KBM-7 (cell line): ENCODE measurements at regions of chr19 and their contacts with region 1.

Region 1: DNA sequence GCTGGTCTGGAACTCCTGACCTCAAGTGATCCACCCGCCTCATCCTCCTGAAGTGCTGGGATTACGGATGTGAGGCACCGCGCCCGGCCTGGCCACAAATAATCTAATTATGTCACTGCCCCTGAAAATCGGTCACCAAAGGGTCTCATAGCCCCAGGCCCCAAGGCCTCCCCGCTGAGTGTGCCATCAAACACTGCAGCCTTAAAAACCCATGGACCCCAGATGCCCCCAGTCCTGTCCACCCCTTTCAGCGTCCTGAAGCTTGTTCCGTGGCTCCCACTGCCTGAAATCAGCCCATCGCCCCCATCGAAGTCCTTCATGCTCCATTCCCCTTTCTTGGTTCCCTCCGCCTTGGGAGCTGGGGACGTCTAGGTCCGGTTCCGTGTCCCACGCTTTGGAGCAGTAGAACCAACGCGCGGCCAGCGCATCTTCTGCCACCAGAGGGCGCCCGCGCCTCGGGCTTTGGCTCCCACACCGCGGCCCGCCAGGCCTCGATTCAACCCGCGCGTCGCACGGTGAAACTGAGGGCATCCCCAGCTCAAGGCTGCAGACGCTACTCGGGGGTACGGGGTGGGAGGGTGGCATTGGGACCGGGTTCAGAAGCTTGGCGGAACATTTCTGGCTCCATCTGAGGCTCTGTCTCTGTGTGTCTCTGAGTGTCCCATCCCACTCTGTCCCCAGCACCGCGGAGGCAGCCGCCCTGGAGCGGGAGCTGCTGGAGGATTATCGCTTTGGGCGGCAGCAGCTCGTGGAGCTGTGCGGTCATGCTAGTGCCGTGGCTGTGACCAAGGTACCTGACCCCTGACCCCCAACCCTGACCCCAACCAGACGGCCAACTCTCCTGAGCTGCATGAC is 3.5 kb downstream of the YJEFN3 start:
- DNase-seq: peak; percentile 68

Region 2: DNA sequence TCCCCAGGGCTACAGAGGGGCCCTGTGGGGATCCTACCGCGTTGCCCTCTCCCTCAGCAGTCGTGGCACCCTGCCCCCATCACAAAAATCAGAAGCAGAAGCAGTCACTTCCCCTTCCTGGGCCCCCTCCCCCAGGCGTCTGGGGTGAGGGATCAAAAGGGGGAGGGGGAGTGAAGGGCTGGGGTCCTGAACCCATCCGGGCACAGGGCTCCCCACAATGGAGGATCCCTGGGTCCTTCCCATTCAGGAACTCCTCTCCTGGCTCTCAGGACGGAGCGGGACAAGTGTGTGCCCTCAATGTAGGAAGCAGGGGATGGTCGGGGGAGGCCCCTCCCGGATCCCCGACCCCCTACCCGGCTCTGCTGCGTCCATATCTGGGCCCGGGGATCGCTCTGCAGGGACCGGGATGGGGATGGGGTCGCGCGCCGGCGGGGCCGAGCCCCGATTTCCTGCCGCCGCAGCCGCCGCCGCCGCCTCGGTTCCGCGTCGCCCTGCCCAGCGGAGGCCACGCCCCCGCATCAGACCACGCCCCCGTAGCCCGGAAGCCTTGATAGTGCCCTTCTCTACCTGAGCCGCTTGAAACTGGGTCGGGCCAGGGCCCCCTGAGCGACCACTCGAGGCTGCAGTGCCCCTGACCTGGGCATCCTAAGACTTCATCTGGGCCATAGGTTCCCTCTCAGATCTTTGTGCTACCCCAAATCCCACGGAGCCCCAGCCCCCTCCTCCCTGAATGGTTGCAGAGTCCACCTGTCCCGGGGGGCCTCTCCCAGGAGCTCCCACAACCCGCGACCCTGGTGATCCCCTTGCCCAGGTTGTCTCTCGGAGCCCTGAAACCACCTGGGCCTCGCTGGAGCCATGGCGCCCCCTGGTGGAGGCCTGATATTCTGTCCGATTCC is 111.2 kb after region 1 on chr19 and contains the start of gene GMIP:
- in situ Hi-C with region 1: loop called (anchors 10 kb)
- DNase-seq: peak; percentile 80

Region 3: DNA sequence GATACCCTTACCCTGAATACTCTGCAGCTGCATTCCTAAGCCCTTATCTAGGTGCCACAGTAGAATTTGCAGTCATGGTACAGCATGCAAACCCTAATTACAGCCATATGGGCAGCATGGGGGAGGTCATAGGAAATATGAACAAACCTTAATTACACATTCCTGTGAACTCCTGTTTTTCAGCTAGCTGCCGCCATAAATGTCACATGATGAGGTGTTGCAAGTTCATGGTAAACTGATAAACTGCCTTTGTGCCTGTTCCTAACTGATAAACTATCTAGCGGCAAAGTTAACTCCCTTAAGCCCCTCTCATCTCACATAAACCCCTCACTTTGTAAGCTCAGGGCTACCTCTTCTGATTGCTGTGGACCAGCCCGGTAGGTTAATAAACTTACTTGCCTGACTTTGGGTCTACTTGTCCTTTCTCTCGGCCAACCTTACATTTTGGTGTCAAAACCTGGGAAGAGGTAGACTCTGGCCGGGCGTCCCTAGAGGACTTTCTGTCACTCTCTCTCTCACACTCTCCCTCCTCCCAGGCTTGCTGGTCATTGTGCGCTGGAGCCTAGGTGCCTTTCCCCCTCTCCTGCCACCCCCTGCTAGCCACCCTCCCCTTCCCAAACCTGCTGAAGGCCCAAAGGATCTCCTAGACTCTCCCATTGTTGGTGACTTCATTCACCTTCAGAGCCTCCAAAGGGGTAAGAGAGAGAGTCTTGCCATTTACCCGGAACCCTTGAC is 411.8 kb after region 1 on chr19:
- in situ Hi-C with region 1: loop called (anchors 25 kb)
- DNase-seq: no peak